ENCODE measurements at regions of chr9 and their contacts with region 1.

Region 1: GRCh38 chr9:129641746-129642513 is at the start of gene ASB6:
- DNase-seq: peak; percentile 98 to 99 (median 98)
- ATAC-seq: peak; percentile 100
- H3K4me3 ChIP-seq: peak within 1 kb of the TSS; percentile 99
- H3K27ac ChIP-seq: peak within 1 kb of the TSS; percentile 74
- H3K4me1 ChIP-seq: peaks cover 0 to 37% of the 10 kb centered on the region in 2 experiments; a peak in 3 of 5 replicates
- H3K27me3 ChIP-seq: no peaks in the 10 kb centered on the region
- CTCF ChIP-seq: peak; percentile 92 to 98 (median 98)
- EP300 ChIP-seq: peak; percentile 50
- POLR2A ChIP-seq: peak; percentile 68; the same call in 1 of the 2 replicates
- RAD21 ChIP-seq: peak; percentile 96 to 97
- polyA plus RNA-seq, gene ASB6: 0.92 to 1.1 TPM

Region 2: DNA sequence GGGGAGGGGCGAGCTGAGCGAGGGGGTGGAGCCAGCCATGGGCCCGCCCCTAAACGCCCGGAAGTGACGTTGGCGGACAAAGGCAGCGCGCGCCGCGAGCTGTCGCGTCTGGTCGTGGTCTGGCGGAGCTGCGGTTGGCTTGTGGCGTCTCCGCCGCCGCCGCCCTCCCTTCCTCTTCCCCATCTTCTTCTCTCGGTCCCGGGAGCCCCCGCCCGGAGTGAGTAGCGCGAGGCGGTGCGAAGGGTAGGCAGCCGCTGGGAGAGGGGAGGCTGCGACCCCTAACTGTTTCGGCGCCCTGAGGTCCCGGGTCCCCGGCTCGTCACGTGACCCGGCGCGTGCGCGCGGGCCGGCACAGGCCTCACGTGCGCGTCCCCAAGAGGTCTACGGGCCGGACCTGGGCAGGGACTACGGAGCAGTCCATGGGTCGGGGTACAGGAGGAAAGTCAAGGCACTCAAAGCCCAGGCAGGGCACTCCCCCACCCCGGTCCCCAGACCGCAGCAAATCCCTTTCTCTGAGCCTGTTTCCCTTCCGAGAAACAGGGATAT is 15.8 kb before region 1 on chr9 and contains the start of gene NTMT1:
- CTCF ChIA-PET with region 1: no interaction called
- POLR2A ChIA-PET with region 1: interaction called, 15 read pairs
- in situ Hi-C with region 1: no loop called
- intact Hi-C with region 1: no loop called
- DNase-seq: peak; percentile 89 to 93 (median 92)
- ATAC-seq: peak; percentile 83
- H3K4me3 ChIP-seq: peak within 1 kb of the TSS; percentile 67
- H3K27ac ChIP-seq: peak within 1 kb of the TSS; percentile 87
- H3K4me1 ChIP-seq: peaks cover 36 to 50% of the 10 kb centered on the region in 2 experiments
- H3K27me3 ChIP-seq: no peaks in the 10 kb centered on the region
- CTCF ChIP-seq: no peak
- EP300 ChIP-seq: 0 out of 2 replicates have a peak, but pooled peaks have one; percentile 8
- POLR2A ChIP-seq: peak; percentile 98
- RAD21 ChIP-seq: no peak
- polyA plus RNA-seq, gene NTMT1: 42.1 to 67.0 TPM

Region 3: GRCh38 chr9:129696938-129697650 is 55.2 kb after region 1 on chr9:
- CTCF ChIA-PET with region 1: no interaction called
- POLR2A ChIA-PET with region 1: interaction called, 3 read pairs
- in situ Hi-C with region 1: no loop called
- intact Hi-C with region 1: loop called (anchors 5 kb)
- DNase-seq: peak in 2 of 4 experiments; percentile 51 to 53
- ATAC-seq: peak; percentile 22; the same call in 1 of the 3 replicates
- H3K4me3 ChIP-seq: no peak overlapping the region
- H3K27ac ChIP-seq: no peak overlapping the region
- H3K4me1 ChIP-seq: peaks cover 0 to 14% of the 10 kb centered on the region in 2 experiments; a peak in 2 of 5 replicates
- H3K27me3 ChIP-seq: peaks cover 65 to 83% of the 10 kb centered on the region in 2 experiments
- CTCF ChIP-seq: no peak
- EP300 ChIP-seq: no peak
- POLR2A ChIP-seq: no peak
- RAD21 ChIP-seq: no peak

Region 4: DNA sequence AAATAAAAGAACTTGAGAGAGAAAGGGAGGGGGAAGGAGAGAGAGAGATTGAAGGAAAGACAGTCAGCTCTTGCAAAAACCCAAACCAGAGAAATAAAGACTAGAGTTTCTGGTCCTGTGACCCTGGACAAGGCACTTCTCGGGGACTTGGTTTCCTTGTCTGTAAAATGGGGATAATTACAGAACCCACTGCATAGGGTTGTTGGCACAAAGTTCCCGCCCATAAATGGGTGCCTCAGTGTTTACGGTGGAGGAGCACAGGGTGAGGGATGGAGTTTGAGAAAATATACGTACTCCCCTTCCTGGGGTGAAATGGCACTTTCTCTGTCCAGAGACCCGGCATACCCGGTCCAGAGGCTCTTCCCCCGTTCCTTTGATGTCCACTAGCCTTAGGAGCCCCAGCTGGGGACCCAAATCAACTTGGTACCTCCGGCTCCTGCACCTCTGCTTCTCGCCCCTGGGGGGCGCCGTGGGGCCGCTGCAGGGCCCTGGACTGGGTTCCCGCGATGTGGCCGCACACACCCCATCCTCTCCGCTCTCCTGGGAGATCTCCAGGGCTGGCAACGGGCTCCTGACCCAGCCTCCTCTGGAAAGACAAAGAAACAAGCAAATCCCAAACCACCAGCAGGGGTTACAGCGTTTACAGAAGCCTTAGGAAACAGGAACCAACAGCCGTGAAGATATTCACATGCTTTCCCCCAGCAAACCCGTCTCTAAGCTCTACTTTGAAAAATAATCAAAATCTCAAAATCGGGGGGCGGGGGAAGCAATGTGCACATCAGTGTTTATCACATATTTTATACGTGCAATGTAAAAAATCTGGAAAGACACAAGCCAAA is 84.6 kb after region 1 on chr9:
- CTCF ChIA-PET with region 1: no interaction called
- POLR2A ChIA-PET with region 1: no interaction called
- in situ Hi-C with region 1: no loop called
- intact Hi-C with region 1: loop called (anchors 5 kb)
- DNase-seq: peak; percentile 88 to 98 (median 96)
- ATAC-seq: peak; percentile 97
- H3K4me3 ChIP-seq: no peak overlapping the region
- H3K27ac ChIP-seq: no peak overlapping the region
- H3K4me1 ChIP-seq: peaks cover 0 to 20% of the 10 kb centered on the region in 2 experiments; a peak in 2 of 5 replicates
- H3K27me3 ChIP-seq: peaks cover 15 to 37% of the 10 kb centered on the region in 2 experiments
- CTCF ChIP-seq: peak; percentile 97 to 100 (median 98)
- EP300 ChIP-seq: no peak
- POLR2A ChIP-seq: no peak
- RAD21 ChIP-seq: peak; percentile 97 to 99

Region 5: DNA sequence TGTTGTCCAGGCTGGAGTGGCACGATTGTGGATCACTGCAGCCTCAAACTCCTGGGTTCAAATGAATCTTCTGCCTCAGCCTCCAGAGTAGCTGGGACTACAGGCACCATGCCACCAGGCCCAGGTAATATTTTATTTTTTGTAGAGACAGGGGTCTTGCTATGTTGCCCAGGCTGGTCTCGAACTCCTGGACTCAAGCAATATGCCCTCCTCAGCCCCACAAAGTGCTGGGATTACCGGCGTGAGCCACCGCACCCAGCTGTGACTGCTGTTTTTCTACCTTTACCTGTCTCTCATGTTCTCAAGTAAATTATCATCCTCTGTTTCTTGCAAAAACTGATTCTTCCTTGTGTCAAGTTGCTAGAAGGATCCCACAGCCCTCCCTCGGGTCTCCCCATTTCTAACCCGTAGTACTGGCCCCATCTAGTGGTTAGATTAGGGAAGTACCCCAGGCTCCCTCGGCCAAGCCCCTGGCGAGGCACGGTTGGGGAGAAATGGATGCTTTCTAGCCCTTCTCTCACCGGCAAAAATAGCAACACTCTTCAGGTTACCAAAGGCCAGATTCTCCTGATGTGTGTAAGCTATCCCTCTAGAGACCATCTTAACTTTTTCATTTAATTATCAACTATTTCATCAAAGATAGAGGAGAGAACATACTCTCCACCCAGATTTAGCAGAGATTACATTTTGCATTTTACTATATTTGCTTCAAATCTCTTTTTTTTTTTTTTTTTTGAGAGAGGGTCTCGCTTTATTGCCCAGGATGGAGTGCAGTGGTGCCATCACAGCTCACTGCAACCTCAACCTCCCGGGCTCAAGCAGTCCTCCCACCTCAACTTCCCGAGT is 141.8 kb after region 1 on chr9:
- CTCF ChIA-PET with region 1: interaction called, 12 read pairs
- POLR2A ChIA-PET with region 1: interaction called, 4 read pairs
- in situ Hi-C with region 1: loop called (anchors 5 kb)
- intact Hi-C with region 1: no loop called
- DNase-seq: peak; percentile 89 to 97 (median 96)
- ATAC-seq: peak; percentile 97
- H3K4me3 ChIP-seq: no peak overlapping the region
- H3K27ac ChIP-seq: no peak overlapping the region
- H3K4me1 ChIP-seq: peaks cover 8 to 15% of the 10 kb centered on the region in 2 experiments; a peak in 3 of 5 replicates
- H3K27me3 ChIP-seq: no peaks in the 10 kb centered on the region; a peak in 1 of 5 replicates
- CTCF ChIP-seq: peak; percentile 97 to 99 (median 99)
- EP300 ChIP-seq: no peak; the same call in 1 of the 2 replicates
- POLR2A ChIP-seq: no peak
- RAD21 ChIP-seq: peak; percentile 100

Region 6: DNA sequence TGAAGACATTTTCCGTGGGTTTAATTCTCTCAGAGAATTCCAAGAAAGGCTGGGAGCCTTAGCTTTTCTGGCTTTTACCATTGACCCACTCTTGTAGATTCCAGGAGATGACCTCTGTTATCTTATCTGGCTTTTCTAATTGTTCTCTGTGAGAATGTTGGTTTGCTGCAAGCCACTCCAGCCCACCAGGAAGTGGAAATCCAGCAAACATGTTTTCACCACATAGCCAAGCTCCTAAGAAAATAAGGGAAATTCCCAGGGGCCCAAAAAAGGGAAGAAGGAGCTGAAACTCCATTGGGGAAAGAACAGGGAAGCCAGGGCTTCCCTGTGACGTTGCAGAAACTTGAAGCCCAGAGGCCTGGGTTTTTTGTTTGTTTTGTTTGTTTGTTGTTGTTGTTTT is 431.4 kb after region 1 on chr9:
- CTCF ChIA-PET with region 1: no interaction called
- POLR2A ChIA-PET with region 1: no interaction called
- in situ Hi-C with region 1: no loop called
- intact Hi-C with region 1: no loop called
- DNase-seq: no peak
- ATAC-seq: no peak
- H3K4me3 ChIP-seq: no peak overlapping the region
- H3K27ac ChIP-seq: no peak overlapping the region
- H3K4me1 ChIP-seq: peaks cover 0 to 13% of the 10 kb centered on the region in 2 experiments; a peak in 3 of 5 replicates
- H3K27me3 ChIP-seq: no peaks in the 10 kb centered on the region
- CTCF ChIP-seq: no peak
- EP300 ChIP-seq: no peak
- POLR2A ChIP-seq: no peak
- RAD21 ChIP-seq: no peak